ENCODE measurements at regions of chr17 and their contacts with region 1.

Region 1: DNA sequence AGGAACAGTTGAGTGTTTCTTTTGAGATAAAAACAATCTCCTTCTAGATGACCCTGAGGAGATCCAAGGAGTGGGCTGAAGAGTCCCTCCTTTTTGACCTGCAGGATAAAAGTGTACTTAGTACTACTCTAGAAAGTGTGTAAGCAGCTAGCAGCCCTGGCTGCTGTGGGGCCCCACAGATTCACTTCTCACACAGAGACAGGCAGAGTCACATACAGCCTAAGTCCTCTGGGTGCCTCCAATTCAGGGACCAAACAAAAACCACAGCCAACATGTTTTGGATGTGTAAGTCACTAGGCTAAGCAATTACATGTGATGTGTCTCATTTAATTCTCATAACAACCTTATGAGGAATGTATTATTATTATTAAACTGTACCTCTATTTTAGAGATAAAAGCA is 97.1 kb downstream of the TMEM100 start:
- DNase-seq: no peak
- ATAC-seq: no peak
- H3K4me3 ChIP-seq: no peak overlapping the region
- H3K27ac ChIP-seq: no peak overlapping the region
- H3K4me1 ChIP-seq: peaks cover 0 to 14% (median 0%) of the 10 kb centered on the region in 9 donors
- H3K27me3 ChIP-seq: peaks cover 0 to 75% (median 24%) of the 10 kb centered on the region in 7 donors
- CTCF ChIP-seq: no peak

Region 2: DNA sequence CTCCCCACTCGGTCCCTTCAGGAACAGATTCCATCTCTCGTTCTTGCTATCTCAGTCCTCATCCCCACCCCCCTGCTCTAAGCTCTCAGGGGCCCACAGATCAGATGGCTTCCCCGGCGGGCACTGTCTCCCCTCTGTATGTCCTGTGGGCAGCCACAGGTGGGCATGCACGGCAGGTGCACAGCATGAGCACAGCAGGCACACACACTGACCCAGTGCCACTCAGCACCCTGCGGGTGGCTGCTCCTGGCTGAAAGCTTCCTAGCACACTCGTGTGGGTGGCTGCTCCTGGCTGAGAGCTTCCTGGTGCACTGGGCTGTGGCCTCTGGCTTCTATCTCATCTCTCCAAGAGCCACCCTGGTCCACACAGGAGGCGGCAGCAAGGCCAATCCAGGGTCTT is 69.7 kb before region 1 on chr17:
- intact Hi-C with region 1: loop called in 1 of 10 experiments (anchors 10 kb)
- DNase-seq: no peak
- ATAC-seq: no peak
- H3K4me3 ChIP-seq: no peak overlapping the region
- H3K27ac ChIP-seq: no peak overlapping the region
- H3K4me1 ChIP-seq: no peaks in the 10 kb centered on the region
- H3K27me3 ChIP-seq: peaks cover 0 to 12% (median 0%) of the 10 kb centered on the region in 7 donors
- CTCF ChIP-seq: no peak